Caco-2 (cell line): ENCODE measurements at regions of chr11 and their contacts with region 1.

Region 1: GRCh38 chr11:75786101-75786736 is 17.6 kb downstream of the DGAT2 start:
- DNase-seq: peak; percentile 97 to 98
- H3K4me3 ChIP-seq: no peak overlapping the region
- H3K4me3 Mint-ChIP-seq: peak overlapping the region; percentile 53
- H3K27ac Mint-ChIP-seq: peak overlapping the region; percentile 77
- H3K4me1 ChIP-seq: peaks cover 60% of the 10 kb centered on the region
- H3K4me1 Mint-ChIP-seq: peaks cover 57% of the 10 kb centered on the region
- H3K27me3 ChIP-seq: no peaks in the 10 kb centered on the region
- H3K27me3 Mint-ChIP-seq: no peaks in the 10 kb centered on the region
- CTCF ChIP-seq: no peak

Region 2: GRCh38 chr11:75718419-75719339 is 67.5 kb before region 1 on chr11:
- CTCF ChIA-PET with region 1: interaction called, 12 read pairs
- POLR2A ChIA-PET with region 1: no interaction called
- intact Hi-C with region 1: no loop called
- DNase-seq: no peak
- H3K4me3 ChIP-seq: no peak overlapping the region
- H3K4me3 Mint-ChIP-seq: no peak overlapping the region
- H3K27ac Mint-ChIP-seq: peak overlapping the region; percentile 65
- H3K4me1 ChIP-seq: peaks cover 28% of the 10 kb centered on the region
- H3K4me1 Mint-ChIP-seq: peaks cover 18% of the 10 kb centered on the region
- H3K27me3 ChIP-seq: no peaks in the 10 kb centered on the region
- H3K27me3 Mint-ChIP-seq: no peaks in the 10 kb centered on the region
- CTCF ChIP-seq: no peak

Region 3: DNA sequence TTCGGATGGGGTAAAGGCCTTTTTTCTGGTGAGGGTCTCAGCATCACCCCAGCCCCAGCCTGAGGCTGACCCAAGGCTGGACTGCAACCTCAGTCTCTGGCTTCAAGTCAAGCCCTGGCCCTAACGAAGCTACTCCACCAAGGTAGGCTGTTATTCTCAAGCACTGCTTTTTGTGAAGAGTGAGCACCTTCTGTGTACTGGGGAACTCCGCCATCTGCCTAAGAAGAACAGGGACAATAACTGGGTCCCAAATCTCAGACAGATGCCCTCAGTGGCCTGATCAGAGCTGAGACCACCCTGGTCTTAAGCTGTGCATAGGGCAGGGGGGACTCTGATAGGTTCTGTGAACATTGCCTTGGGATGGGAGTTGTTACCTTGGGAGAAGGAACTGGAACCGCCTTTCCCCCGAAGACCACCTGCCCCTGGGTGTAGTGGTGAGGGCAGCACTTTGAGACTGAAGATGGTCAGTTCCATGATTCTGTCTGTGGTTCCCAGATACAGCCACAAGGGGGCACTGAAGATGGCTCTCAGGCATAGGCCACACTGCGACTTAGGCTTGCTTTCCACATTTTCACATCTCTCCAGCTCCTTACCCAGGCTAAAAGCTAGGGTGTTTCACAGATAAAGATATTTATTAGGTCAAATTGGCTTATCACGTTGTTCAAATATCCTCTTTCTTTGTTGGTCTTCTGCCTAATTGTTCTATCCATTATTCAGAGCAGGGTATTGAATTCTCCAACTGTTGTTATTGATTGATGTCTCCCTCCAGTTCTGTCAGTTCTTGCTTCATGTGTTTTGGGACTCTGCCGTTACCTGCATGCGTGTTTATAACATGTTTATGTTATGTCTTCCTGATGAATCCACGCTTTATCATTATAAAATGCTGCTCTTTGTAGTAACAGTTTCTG is 16.9 kb after region 1 on chr11:
- CTCF ChIA-PET with region 1: interaction called, 18 read pairs
- POLR2A ChIA-PET with region 1: no interaction called
- intact Hi-C with region 1: loop called (anchors 1 kb)
- DNase-seq: peak; percentile 79 to 89
- H3K4me3 ChIP-seq: no peak overlapping the region
- H3K4me3 Mint-ChIP-seq: no peak overlapping the region
- H3K27ac Mint-ChIP-seq: no peak overlapping the region
- H3K4me1 ChIP-seq: no peaks in the 10 kb centered on the region
- H3K4me1 Mint-ChIP-seq: no peaks in the 10 kb centered on the region
- H3K27me3 ChIP-seq: no peaks in the 10 kb centered on the region
- H3K27me3 Mint-ChIP-seq: no peaks in the 10 kb centered on the region
- CTCF ChIP-seq: peak; percentile 98